ENCODE measurements at regions of chr2 and their contacts with region 1.

Region 1: GRCh38 chr2:149561309-149561926 is 26.2 kb downstream of the MMADHC start:
- DNase-seq: peak; percentile 23
- H3K4me3 ChIP-seq: peak overlapping the region in 1 of 2 experiments; percentile 50; a peak in 1 of 4 replicates
- H3K27ac ChIP-seq: peak overlapping the region in 1 of 2 experiments; percentile 67; a peak in 1 of 4 replicates
- H3K4me1 ChIP-seq: no peaks in the 10 kb centered on the region; a peak in 1 of 4 replicates
- H3K27me3 ChIP-seq: no peaks in the 10 kb centered on the region
- CTCF ChIP-seq: peak; percentile 98
- EP300 ChIP-seq: no peak
- RAD21 ChIP-seq: peak; percentile 89

Region 2: DNA sequence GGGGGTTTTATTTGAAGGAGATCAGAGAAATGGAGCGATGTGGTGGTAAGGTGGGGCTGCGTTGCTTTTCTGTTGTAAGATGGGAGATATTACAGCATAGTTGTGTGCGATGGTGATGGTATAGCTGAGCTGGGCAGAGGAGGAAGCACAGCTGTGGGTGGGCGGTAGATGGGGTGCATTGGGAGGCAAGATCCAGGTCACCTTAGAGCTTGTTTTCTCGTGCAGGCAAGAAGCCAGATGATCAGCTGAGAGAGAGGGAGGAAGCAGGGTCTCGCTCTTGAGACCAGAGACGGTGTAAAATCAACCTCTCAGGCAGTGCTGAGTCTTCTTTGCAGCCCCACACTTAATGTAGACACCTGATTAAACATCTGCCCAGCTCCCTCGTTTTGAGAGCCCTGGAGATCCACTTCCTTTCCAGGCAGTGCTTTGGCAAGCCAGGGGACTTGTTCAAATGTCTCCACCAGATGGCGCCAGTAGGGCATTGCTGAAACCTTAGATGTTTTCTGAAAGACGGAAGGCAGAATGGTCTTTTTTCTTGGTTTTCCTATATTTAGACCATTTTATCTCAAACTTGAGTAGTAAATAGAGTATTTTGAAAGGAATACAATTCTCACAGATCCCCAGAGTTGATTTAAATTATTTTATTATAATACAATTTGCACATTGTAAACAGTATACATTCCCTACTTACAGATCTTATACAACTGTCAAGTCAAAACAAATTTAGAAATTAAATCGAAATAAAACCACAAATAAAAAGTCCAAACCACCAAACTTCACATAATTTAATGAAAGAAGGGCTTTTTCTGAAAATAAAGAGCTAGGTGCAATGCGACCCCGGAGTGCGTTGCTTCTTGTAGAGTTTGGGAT is 544.1 kb before region 1 on chr2:
- CTCF ChIA-PET with region 1: interaction called, 110 read pairs
- POLR2A ChIA-PET with region 1: no interaction called
- DNase-seq: peak; percentile 77
- H3K4me3 ChIP-seq: peak overlapping the region in 1 of 2 experiments; percentile 45; a peak in 1 of 4 replicates
- H3K27ac ChIP-seq: no peak overlapping the region
- H3K4me1 ChIP-seq: peaks cover 0 to 5% of the 10 kb centered on the region in 2 experiments; a peak in 2 of 4 replicates
- H3K27me3 ChIP-seq: no peaks in the 10 kb centered on the region
- CTCF ChIP-seq: peak; percentile 88
- EP300 ChIP-seq: no peak
- RAD21 ChIP-seq: peak; percentile 92

Region 3: GRCh38 chr2:149076863-149077412 is 484.5 kb before region 1 on chr2:
- CTCF ChIA-PET with region 1: interaction called, 10 read pairs
- POLR2A ChIA-PET with region 1: no interaction called
- DNase-seq: peak; percentile 34
- H3K4me3 ChIP-seq: no peak overlapping the region; a peak in 1 of 4 replicates
- H3K27ac ChIP-seq: peak overlapping the region; percentile 21 to 72; a peak in 3 of 4 replicates
- H3K4me1 ChIP-seq: peaks cover 16 to 26% of the 10 kb centered on the region in 2 experiments; a peak in 3 of 4 replicates
- H3K27me3 ChIP-seq: no peaks in the 10 kb centered on the region
- CTCF ChIP-seq: no peak
- EP300 ChIP-seq: peak in 1 of 2 experiments; percentile 75; a peak in 2 of 4 replicates
- RAD21 ChIP-seq: no peak

Region 4: DNA sequence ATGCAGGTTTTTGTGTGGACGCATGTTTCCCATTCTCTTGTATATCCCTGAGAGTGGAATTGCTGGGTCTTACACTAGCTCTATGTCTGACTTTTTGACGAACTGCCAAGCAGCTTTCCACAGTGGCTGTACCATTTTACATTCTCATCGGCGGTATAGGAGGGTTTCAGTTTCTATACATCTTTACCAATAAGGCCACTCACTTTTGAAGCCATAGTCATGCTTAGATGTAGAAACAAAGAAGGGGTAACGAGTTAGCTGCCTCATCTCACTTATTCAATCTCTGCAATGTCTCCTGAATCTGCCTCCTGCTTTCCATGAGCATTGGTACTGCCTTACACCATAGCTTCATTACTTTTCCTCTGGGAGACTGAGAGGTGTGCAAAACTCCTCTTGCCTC is 21.3 kb before region 1 on chr2:
- CTCF ChIA-PET with region 1: interaction called, 10 read pairs
- POLR2A ChIA-PET with region 1: no interaction called
- DNase-seq: no peak
- H3K4me3 ChIP-seq: no peak overlapping the region
- H3K27ac ChIP-seq: no peak overlapping the region
- H3K4me1 ChIP-seq: no peaks in the 10 kb centered on the region; a peak in 1 of 4 replicates
- H3K27me3 ChIP-seq: no peaks in the 10 kb centered on the region
- CTCF ChIP-seq: no peak
- EP300 ChIP-seq: no peak
- RAD21 ChIP-seq: no peak

Measured in SK-N-SH (cell line).